ENCODE measurements at regions of chr2 and their contacts with region 1.

Region 1: DNA sequence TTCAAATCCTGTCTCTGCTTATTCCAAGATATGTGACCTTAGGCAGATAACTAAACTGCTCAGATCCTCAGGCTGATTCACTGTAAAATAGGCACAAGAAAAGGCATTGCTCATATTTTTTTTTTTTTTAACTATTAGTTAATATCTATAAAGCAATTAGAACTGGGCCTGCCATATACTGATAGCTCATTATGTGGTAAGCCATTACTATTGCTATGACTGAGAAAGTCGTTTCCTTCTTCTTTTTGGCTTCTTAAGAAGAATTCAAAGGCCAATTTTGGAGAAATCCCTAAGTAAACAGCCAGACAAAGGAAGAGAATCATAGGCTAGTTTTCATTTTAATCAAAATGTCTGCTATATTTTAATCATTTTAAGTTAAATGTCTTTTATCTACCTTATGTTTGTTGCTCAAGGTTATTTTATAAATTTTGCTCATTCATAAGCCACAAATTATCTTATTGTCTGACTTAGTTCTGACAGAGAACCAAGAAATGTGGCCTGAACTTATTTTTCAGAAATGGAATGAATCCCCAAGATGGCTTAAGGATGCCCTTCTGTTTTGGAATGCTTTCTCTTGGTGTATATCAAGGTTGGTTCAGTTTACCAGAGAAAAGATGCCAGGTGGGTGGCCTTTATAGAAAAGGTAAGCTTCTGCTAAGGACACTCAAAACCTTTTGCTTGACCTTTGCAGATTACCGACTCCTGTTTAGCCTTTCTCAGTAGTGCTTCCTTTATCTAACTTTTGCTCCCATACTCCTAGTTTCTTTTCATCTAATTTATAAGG is 21.3 kb upstream of the VRK2 start:
- DNase-seq: no peak

Region 2: DNA sequence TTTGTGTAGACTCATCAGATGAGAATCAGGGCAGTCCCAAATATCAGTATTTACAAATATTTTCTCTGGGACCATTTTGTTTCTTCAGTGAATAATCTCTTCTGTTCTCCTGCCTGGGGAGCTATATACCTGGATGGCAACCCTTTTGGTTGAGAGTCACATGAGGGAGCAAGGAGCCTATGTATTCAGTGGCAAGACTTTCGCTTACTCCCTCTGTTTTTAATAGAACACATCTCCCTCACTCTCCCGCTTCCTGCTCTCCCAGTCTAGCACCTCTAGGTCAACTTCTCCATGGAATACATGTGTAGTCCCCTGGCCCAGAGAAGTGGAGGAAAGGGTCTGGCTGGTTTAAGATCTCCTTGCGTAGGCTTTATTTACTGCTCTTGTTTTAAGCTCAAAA is 1241.3 kb before region 1 on chr2:
- intact Hi-C with region 1: no loop called
- DNase-seq: no peak

Region 3: GRCh38 chr2:59398081-59398480 is 1372.7 kb after region 1 on chr2:
- intact Hi-C with region 1: loop called in 1 of 2 experiments (anchors 10 kb)
- DNase-seq: no peak